ENCODE measurements at regions of chr4 and their contacts with region 1.

Region 1: GRCh38 chr4:87073199-87074120 is 138.6 kb downstream of the AFF1 start:
- DNase-seq: no peak
- ATAC-seq: peak; percentile 78

Region 2: DNA sequence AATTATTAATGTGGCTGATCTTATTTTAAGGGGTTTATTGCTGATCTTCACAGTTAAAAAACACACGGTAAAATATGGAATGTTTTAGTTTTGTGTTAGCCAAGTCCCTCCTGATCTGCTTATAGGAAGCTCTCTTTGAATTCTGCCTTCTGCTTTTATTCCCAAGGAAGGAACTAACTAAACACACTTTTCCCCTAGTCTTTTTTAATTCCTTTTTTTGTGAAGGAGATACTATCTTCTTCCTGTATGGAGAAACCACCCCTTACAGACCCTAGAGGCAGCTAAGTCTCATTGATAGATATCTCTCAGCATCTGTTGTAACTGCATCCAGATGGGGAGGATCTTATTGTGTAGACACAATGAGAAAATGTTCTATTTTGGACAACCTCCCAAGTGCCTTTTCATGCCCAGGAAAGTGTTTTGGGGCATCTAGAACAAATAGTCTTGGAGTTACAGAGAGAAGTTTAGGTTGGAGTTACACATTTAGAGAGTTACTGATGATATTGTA is 74.3 kb before region 1 on chr4:
- intact Hi-C with region 1: no loop called
- DNase-seq: no peak
- ATAC-seq: peak; percentile 21

Region 3: DNA sequence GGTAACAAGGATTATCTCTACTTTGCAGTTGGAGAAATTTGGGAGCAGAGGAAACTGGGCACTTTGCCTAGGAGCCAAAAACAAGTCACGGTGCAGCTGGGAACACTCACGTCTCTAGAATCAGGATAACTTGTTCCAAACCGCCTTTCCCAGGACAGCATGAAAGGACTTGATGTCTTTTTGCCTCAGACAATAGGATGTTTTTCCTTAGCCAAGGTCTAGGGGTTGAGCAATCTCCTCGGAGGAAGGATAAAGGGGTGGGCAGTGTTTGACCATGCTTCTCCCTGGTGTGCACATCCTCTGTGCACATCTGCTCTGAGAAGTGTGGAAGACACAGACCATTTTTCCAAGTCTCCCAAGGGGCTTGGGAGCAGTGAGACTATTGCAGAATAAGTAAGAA is 457.4 kb after region 1 on chr4:
- intact Hi-C with region 1: loop called (anchors 5 kb)
- DNase-seq: peak; percentile 77
- ATAC-seq: peak; percentile 96